Ascending aorta (tissue), 2 donors: ENCODE measurements at regions of chr1 and their contacts with region 1.

Region 1: DNA sequence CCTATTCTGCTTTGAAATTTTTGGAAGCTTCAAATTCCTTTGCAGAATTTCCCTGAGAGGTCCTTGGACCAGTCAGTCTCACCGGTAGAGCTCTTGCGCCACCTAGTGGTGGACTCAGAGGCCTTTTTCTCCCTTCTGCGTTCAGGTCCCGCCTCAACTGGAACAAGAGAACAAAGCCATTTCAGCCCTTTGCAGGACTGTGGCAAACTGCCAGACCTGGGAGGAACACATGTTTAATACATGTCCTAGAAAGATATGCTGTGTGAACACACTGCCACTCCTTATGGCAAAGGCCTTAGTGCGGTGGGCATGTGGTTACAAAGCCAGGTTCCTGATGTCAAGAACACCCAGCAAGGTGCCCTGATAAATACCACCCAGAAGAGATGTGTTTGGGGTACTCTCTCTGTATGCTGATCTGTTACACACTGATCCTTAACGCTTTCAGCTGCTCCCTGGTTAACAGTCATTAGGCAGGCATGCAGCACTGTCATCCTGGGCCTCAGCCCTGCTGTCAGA is 82.2 kb upstream of the SSX2IP start:
- DNase-seq: peak in 1 of 2 donors; percentile 89
- H3K4me3 ChIP-seq: no peak overlapping the region
- H3K27ac ChIP-seq: no peak overlapping the region
- H3K4me1 ChIP-seq: no peaks in the 10 kb centered on the region
- H3K27me3 ChIP-seq: no peaks in the 10 kb centered on the region
- CTCF ChIP-seq: peak; percentile 76 to 94 (median 85)

Region 2: GRCh38 chr1:84442256-84442655 is 330.2 kb before region 1 on chr1:
- intact Hi-C with region 1: loop called (anchors 1 kb)
- DNase-seq: no peak
- H3K4me3 ChIP-seq: no peak overlapping the region
- H3K27ac ChIP-seq: no peak overlapping the region
- H3K4me1 ChIP-seq: no peaks in the 10 kb centered on the region
- H3K27me3 ChIP-seq: no peaks in the 10 kb centered on the region
- CTCF ChIP-seq: peak; percentile 22 to 56 (median 51)

Region 3: GRCh38 chr1:84753516-84754385 is 18.7 kb before region 1 on chr1:
- intact Hi-C with region 1: no loop called
- DNase-seq: peak in 1 of 2 donors; percentile 70
- H3K4me3 ChIP-seq: no peak overlapping the region
- H3K27ac ChIP-seq: no peak overlapping the region
- H3K4me1 ChIP-seq: peaks cover 0 to 3% of the 10 kb centered on the region in 2 donors
- H3K27me3 ChIP-seq: no peaks in the 10 kb centered on the region
- CTCF ChIP-seq: peak; percentile 85 to 97 (median 89)